Gastrocnemius medialis (tissue), 4 donors: ENCODE measurements at regions of chr1 and their contacts with region 1.

Region 1: DNA sequence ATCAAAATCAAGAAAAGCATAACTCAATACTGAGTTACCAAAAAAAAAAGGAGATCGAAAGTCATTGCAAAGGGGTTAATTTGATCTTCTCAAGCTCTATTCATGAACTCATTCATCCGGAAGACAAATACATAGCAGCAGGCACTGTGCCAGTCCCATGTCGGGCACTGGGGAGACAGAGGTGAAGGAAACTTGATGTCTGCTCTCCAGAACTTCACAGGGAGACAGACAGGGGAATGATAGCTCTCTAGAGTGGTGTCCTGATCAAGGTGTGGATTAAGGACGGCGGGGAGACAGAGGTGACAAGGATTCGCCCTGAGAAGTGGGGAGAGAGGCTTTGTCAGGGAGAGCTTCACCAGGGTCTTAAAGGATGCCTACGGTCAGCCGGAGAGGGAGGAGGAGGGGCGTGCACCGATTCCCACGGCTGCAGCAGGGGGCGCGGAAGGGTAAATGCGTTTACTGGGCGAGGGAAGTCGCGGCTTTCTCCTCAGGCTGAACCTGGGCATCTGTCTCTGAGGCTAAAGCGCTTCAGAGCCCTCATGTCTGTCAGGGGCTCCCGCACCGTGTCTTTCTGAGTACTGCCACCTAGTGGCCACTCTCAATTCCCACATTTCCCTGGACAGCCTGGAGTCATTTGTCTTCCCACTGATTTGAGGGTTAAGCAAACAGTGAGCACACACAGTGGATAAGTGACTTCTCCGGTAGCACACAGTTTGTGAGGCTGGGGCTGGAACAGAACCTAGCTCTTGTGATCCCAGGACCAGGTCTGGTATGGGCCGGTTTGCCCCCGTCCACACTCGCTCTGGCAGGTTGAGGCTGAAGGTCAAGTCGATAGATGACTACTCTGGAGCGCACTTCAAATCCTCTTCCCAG is 152.8 kb downstream of the TENT5C start:
- DNase-seq: peak; percentile 47 to 66
- ATAC-seq: peak; percentile 95 to 96
- H3K4me3 ChIP-seq: peak overlapping the region; percentile 47 to 69 (median 54)
- H3K27ac ChIP-seq: peak overlapping the region in 1 of 4 donors; percentile 51
- H3K4me1 ChIP-seq: peaks cover 3 to 7% of the 10 kb centered on the region in 2 donors
- H3K27me3 ChIP-seq: no peaks in the 10 kb centered on the region
- CTCF ChIP-seq: peak; percentile 64 to 91 (median 84)
- POLR2A ChIP-seq: no peak

Region 2: DNA sequence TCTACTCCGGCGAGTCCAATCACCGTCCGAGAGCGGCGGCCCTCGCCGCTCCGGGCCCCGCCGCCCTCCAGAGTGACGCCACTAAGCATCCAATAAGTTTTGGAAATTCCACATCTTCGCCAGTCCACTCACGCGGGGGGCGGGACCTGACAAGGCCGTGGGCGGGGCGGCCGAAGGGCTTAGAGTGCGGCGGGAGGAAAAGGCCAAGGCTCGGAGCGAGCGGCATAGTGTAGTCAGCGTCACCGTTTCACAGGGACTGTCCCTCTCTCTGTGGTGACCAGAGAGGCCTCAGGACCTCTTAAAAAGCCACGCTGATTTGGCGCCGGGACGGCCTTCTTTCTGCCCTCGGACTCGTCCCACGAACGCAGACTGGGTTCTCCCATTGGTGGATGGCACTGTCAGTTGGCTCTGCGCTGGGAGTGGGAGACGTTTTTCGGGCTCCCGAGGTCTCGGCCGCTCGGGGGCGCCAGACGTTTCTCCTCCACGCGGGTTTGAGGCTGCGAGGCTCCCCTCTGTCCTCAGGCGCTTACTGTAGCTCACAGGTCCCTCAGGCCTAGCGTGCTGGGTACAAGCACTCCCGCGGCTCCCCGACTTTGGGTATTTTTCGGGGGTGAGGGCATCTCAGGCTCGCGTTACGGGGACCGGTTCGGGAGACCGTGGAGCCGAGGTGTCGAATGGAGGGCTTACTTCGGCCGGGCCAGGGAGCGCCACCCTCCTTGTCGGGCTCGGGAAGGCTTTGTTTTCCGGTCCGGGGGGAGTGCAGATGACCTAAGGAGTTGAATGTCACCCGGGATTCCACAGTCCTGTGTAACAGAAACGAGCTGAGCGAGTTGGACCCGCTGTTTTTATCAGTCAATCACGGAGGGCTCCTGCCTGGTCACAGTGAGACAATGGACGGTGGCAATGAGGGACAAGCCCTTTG is 636.6 kb before region 1 on chr1:
- in situ Hi-C with region 1: no loop called
- intact Hi-C with region 1: loop called (anchors 10 kb)
- DNase-seq: peak; percentile 93 to 97
- ATAC-seq: peak; percentile 84 to 90
- H3K4me3 ChIP-seq: peak overlapping the region; percentile 60 to 85 (median 80)
- H3K27ac ChIP-seq: peak overlapping the region; percentile 87 to 97 (median 92)
- H3K4me1 ChIP-seq: peaks cover 54 to 61% of the 10 kb centered on the region in 2 donors
- H3K27me3 ChIP-seq: no peaks in the 10 kb centered on the region
- CTCF ChIP-seq: peak; percentile 59 to 82 (median 66)
- POLR2A ChIP-seq: peak; percentile 62 to 66

Region 3: GRCh38 chr1:117367047-117368018 is 391.3 kb before region 1 on chr1 and contains the start of gene MAN1A2:
- in situ Hi-C with region 1: no loop called
- intact Hi-C with region 1: loop called (anchors 10 kb)
- DNase-seq: peak; percentile 91 to 92
- ATAC-seq: peak; percentile 75 to 86
- H3K4me3 ChIP-seq: peak within 1 kb of the TSS; percentile 67 to 94 (median 88)
- H3K27ac ChIP-seq: peak within 1 kb of the TSS; percentile 92 to 97 (median 96)
- H3K4me1 ChIP-seq: peaks cover 37 to 43% of the 10 kb centered on the region in 2 donors
- H3K27me3 ChIP-seq: no peaks in the 10 kb centered on the region
- CTCF ChIP-seq: peak in 1 of 5 experiments; percentile 17
- POLR2A ChIP-seq: peak; percentile 90 to 95
- total RNA-seq, gene MAN1A2: 14.9 to 37.0 (median 28.3) TPM

Region 4: GRCh38 chr1:117534995-117535467 is 223.6 kb before region 1 on chr1:
- in situ Hi-C with region 1: loop called (anchors 5 to 25 kb)
- intact Hi-C with region 1: loop called (anchors 1 kb)
- DNase-seq: peak in 1 of 2 donors; percentile 22
- ATAC-seq: peak; percentile 92 to 96
- H3K4me3 ChIP-seq: no peak overlapping the region
- H3K27ac ChIP-seq: no peak overlapping the region
- H3K4me1 ChIP-seq: peaks cover 4% of the 10 kb centered on the region in 2 donors
- H3K27me3 ChIP-seq: no peaks in the 10 kb centered on the region
- CTCF ChIP-seq: peak; percentile 58 to 78 (median 76)
- POLR2A ChIP-seq: no peak

Region 5: GRCh38 chr1:117622726-117623125 is 136.0 kb before region 1 on chr1:
- in situ Hi-C with region 1: no loop called
- intact Hi-C with region 1: loop called (anchors 2 kb)
- DNase-seq: peak; percentile 46 to 74
- ATAC-seq: peak; percentile 88 to 98
- H3K4me3 ChIP-seq: no peak overlapping the region
- H3K27ac ChIP-seq: peak overlapping the region; percentile 47 to 73 (median 70)
- H3K4me1 ChIP-seq: peaks cover 39 to 58% of the 10 kb centered on the region in 2 donors
- H3K27me3 ChIP-seq: no peaks in the 10 kb centered on the region
- CTCF ChIP-seq: peak in 4 of 5 experiments; percentile 40 to 54 (median 46)
- POLR2A ChIP-seq: no peak

Region 6: GRCh38 chr1:117685936-117686806 is 72.5 kb before region 1 on chr1:
- in situ Hi-C with region 1: no loop called
- intact Hi-C with region 1: loop called (anchors 2 kb)
- DNase-seq: peak; percentile 87 to 91
- ATAC-seq: peak; percentile 69 to 76
- H3K4me3 ChIP-seq: no peak overlapping the region
- H3K27ac ChIP-seq: peak overlapping the region; percentile 84 to 95 (median 94)
- H3K4me1 ChIP-seq: peaks cover 57 to 60% of the 10 kb centered on the region in 2 donors
- H3K27me3 ChIP-seq: no peaks in the 10 kb centered on the region
- CTCF ChIP-seq: peak in 4 of 5 experiments; percentile 12 to 39 (median 34)
- POLR2A ChIP-seq: peak in 1 of 2 donors; percentile 66

Region 7: DNA sequence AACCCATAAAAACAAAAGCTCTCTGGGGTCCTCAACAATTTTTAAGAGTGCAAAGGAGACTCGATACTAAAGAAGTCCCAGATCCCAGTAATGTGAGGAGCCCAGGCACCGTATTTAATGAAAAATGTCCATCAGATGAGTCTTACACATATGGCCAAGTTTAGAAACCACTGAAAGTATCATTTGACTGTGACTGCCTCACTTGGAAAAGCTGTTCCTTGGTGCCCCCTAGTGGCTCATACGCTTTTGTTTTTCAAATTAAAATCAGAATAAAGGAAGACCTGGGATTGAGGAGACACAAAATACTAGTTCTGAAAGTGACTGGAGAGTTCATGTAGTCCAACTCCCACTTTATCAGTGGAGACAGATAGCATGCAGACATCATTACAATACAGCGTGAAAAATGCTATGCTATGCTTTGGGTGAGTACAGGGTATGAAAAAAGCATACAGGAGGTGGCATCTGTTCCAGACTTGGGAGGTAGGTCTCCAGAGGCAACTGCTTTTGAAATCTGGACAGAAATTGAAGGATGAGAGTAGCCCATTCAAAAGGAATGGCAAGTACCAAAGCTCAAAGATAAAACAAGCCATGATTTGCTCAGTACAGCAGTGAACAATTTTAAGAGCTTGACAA is 136.9 kb after region 1 on chr1:
- in situ Hi-C with region 1: no loop called
- intact Hi-C with region 1: loop called (anchors 2 kb)
- DNase-seq: peak; percentile 46 to 48
- ATAC-seq: peak; percentile 90 to 96
- H3K4me3 ChIP-seq: no peak overlapping the region
- H3K27ac ChIP-seq: peak overlapping the region; percentile 12 to 56 (median 46)
- H3K4me1 ChIP-seq: peaks cover 0 to 9% of the 10 kb centered on the region in 2 donors
- H3K27me3 ChIP-seq: no peaks in the 10 kb centered on the region
- CTCF ChIP-seq: peak; percentile 40 to 76 (median 64)
- POLR2A ChIP-seq: no peak